ENCODE measurements at regions of chr17 and their contacts with region 1.

Region 1: GRCh38 chr17:6473128-6473767 is 29.0 kb downstream of the PIMREG start:
- DNase-seq: peak; percentile 77
- H3K4me3 Mint-ChIP-seq: peak overlapping the region; percentile 15
- H3K27ac Mint-ChIP-seq: no peak overlapping the region
- H3K4me1 Mint-ChIP-seq: peaks cover 19% of the 10 kb centered on the region
- H3K27me3 Mint-ChIP-seq: no peaks in the 10 kb centered on the region
- CTCF ChIP-seq: peak; percentile 88

Region 2: GRCh38 chr17:6507535-6507934 is 34.3 kb after region 1 on chr17:
- CTCF ChIA-PET with region 1: interaction called, 6 read pairs
- POLR2A ChIA-PET with region 1: interaction called, 5 read pairs
- intact Hi-C with region 1: loop called (anchors 1 kb)
- DNase-seq: peak; percentile 95
- H3K4me3 Mint-ChIP-seq: peak overlapping the region; percentile 38
- H3K27ac Mint-ChIP-seq: peak overlapping the region; percentile 90
- H3K4me1 Mint-ChIP-seq: peaks cover 32% of the 10 kb centered on the region
- H3K27me3 Mint-ChIP-seq: no peaks in the 10 kb centered on the region
- CTCF ChIP-seq: no peak

Region 3: DNA sequence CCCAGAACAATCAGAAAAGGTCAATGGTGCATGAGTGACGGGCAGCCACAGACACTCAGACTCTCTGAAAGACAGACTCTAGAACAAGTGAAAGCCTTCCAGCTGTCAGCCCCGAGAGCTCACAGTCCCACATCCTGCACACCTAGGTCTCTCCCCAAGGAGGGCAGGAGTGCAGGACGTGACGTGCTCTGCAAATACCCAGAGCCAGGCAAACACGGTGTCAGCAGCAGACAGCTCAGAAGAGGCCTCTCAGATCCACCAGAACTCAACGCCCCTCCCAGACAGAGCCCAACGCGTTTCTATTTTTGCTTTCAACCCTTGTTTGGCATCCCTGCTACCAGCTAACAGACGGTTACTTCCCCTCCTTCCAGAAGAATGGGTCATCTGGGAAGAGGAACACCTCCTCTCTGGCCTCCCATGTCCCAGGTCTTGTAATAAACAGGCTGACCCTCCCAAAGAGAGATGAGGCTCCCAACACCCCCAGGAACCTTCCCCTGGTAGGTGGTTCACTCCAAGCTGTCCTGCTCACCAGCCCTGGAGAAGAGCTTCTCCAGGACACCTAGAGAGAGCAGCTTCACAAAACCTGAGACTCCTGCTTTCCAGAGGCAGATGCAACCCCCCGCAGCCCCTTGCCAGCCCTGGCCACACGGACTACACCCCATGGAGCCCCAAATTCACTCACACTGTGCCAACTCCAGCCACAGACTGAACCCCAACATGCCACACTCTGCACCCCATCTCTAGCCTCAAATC is 75.5 kb after region 1 on chr17:
- CTCF ChIA-PET with region 1: interaction called, 30 read pairs
- POLR2A ChIA-PET with region 1: interaction called, 19 read pairs
- intact Hi-C with region 1: no loop called
- DNase-seq: no peak
- H3K4me3 Mint-ChIP-seq: no peak overlapping the region
- H3K27ac Mint-ChIP-seq: no peak overlapping the region
- H3K4me1 Mint-ChIP-seq: peaks cover 42% of the 10 kb centered on the region
- H3K27me3 Mint-ChIP-seq: no peaks in the 10 kb centered on the region
- CTCF ChIP-seq: no peak

Region 4: GRCh38 chr17:6567529-6568183 is 94.4 kb after region 1 on chr17:
- CTCF ChIA-PET with region 1: interaction called, 3 read pairs
- POLR2A ChIA-PET with region 1: interaction called, 14 read pairs
- intact Hi-C with region 1: no loop called
- DNase-seq: peak; percentile 95
- H3K4me3 Mint-ChIP-seq: no peak overlapping the region
- H3K27ac Mint-ChIP-seq: peak overlapping the region; percentile 63
- H3K4me1 Mint-ChIP-seq: peaks cover 23% of the 10 kb centered on the region
- H3K27me3 Mint-ChIP-seq: no peaks in the 10 kb centered on the region
- CTCF ChIP-seq: no peak

Region 5: DNA sequence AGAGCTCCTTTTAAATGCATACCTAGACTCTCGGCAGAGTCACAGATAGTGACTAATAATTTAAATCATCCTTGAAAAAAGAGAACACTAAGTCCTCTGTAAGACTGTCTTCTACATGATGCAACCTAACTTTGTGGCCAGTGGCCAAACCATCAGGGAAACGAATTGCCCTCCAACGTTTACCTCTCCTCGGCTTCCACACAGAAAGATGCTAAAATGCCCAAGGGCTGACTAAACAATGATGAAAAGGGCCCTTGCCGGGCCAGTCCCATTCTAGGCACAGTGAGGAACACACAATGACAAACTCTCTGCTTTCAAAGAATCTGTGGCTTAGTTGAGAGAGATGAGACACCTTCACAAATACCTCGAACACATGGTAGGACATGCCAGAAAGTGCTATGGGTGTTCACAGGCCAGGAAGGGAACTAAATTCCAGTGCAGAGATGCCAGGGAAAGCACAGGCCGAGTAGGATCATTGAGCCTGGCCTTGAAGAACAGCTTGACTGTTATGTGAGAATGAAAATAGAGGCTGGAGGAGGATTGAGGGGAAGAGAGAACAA is 118.4 kb after region 1 on chr17:
- CTCF ChIA-PET with region 1: interaction called, 16 read pairs
- POLR2A ChIA-PET with region 1: interaction called, 5 read pairs
- intact Hi-C with region 1: loop called (anchors 1 kb)
- DNase-seq: peak; percentile 95
- H3K4me3 Mint-ChIP-seq: peak overlapping the region; percentile 8
- H3K27ac Mint-ChIP-seq: peak overlapping the region; percentile 64
- H3K4me1 Mint-ChIP-seq: peaks cover 21% of the 10 kb centered on the region
- H3K27me3 Mint-ChIP-seq: no peaks in the 10 kb centered on the region
- CTCF ChIP-seq: no peak

Region 6: GRCh38 chr17:6640536-6641373 is 167.5 kb after region 1 on chr17 and contains the starts of genes KIAA0753 and TXNDC17:
- CTCF ChIA-PET with region 1: interaction called, 9 read pairs
- POLR2A ChIA-PET with region 1: interaction called, 33 read pairs
- intact Hi-C with region 1: loop called (anchors 1 kb)
- DNase-seq: peak; percentile 89
- H3K4me3 Mint-ChIP-seq: peak within 1 kb of the TSS; percentile 96
- H3K27ac Mint-ChIP-seq: peak within 1 kb of the TSS; percentile 96
- H3K4me1 Mint-ChIP-seq: peaks cover 27% of the 10 kb centered on the region
- H3K27me3 Mint-ChIP-seq: no peaks in the 10 kb centered on the region
- CTCF ChIP-seq: no peak
- total RNA-seq, gene KIAA0753: 22.8 and 25.3 TPM in 2 replicates
- total RNA-seq, gene TXNDC17: 137 and 146 TPM in 2 replicates